PC-9 (cell line): ENCODE measurements at regions of chr6 and their contacts with region 1.

Region 1: DNA sequence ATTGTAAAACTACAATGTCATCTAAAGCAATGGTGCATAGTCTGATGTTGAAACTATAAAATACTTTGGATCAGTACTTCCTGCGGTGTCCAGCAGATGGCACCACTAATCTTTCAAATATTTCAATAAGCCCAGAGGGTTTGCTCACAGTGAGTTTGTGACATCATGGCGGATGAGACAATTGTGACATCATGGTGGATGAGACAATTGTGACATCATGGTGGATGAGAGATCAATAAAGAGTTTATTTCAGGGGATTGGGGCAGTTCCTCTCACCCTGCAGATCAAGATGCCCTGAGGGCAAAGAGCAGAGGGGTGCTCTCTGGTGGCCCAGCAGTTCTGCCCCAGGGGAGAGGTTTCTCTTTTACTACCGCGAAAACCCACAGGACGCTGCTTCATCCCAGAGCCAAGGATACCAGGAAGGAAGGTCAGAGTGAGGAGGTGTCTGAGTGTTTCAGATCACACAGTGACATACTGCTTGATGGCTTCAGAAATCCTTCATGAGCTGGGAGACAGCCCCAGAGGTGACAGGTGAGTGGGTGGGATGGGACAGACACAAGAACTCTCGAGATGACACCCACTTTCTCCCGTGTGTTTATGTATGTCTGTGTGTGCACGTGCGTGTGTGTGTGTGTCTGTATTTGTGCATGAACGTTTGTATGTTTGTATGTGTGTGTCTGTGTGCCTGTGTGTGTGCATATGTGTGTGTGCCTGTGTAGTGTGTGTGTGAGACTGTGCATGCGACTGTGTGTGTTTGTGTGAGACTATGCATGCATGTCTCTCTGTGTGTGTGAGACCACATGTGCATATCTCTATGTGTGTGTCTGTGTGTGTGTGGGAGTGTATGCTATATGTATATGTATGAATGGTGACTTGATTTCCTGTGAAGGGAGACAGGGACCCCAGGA is 7.3 kb upstream of the ULBP2 start:
- DNase-seq: peak; percentile 29 to 50
- H3K4me3 ChIP-seq: no peak overlapping the region
- H3K27ac ChIP-seq: no peak overlapping the region
- H3K4me1 ChIP-seq: peaks cover 24% of the 10 kb centered on the region
- H3K27me3 ChIP-seq: no peaks in the 10 kb centered on the region
- CTCF ChIP-seq: peak; percentile 92

Region 2: DNA sequence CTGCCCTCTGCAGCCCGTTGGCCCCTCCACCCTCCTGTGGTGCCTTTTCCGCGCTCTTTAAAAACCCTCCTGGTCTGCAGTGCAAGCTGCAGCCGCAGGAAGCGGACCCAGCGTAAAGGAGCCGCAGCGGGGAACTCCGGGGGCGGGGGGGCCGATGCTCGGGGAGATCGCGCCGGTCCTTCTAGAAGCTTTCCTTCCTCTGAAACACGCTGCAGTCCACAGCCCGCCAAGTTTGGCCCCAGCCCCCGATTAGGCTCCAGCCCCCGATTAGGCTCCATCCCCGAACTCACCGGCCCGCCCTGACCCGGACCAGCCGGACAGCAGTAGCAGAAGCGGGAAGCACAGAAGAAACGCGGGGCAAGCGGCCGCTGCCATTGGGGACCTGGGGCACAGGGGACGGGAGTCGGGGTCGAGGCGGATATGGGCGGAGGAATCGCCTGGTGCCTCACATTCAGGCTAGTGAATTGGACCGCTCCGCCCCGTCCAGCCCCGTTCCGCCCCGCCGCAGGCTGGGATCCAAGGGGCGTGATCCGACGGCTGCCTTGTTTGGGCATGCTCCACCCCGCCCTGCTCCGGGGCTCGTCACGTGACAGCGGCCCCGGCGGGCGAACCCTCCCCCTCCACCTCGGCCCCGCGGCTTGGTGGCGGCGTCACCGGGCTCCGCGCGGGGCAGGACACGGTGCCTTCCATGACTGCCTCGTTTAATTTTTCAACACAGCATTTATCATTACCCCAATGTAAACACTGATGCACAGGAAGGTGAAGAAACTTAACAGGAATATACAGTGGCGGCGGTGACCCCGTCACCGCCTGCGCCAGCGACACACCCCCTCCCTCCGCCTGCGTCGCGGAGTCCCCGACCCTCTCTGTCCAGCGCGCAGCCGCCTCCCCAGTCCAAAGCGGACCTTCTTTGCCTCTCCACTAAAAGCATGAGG is 70.5 kb after region 1 on chr6:
- CTCF ChIA-PET with region 1: no interaction called
- POLR2A ChIA-PET with region 1: no interaction called
- intact Hi-C with region 1: loop called (anchors 2 kb)
- DNase-seq: peak; percentile 78 to 92
- H3K4me3 ChIP-seq: peak overlapping the region; percentile 60
- H3K27ac ChIP-seq: no peak overlapping the region
- H3K4me1 ChIP-seq: peaks cover 16% of the 10 kb centered on the region
- H3K27me3 ChIP-seq: no peaks in the 10 kb centered on the region
- CTCF ChIP-seq: no peak; the same call in 1 of the 2 replicates

Region 3: DNA sequence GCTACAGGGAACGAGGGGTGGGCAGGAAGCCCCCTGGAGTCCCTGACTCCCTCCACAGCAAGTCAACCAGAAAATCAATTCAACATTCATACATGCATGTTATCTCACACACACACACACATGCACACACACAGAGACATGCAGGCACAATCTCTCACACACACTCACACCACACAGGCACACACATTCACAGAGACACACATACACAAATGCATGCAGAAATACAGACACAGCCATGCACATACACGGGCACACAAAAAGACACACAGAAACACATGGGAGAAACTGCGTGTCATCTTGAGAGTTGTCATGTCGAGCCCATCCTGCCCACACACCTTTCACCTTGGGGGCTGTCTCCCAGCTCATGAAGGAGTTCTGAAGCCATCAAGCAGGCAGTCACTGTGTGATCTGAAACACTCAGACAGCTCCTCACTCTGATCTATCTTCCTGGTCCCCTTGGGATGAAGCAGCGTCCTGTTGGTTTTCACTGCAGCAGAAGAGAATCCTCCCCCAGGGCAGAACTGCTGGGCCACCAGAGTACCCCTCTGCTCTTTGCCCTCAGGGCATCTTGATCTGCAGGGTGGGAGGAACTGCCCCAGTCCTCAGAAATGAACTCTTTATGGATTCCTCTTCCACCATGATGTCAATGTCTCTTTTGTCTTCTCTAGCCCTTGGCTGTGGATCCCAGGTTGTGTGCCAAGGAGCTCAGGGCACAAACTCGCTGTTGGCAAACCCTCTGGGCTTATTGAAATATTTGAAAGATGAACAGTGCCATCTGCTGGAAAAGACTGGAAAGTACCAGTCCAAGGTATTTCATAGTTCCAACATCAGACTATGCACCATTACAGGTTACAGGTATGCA is 82.1 kb after region 1 on chr6:
- CTCF ChIA-PET with region 1: no interaction called
- POLR2A ChIA-PET with region 1: no interaction called
- intact Hi-C with region 1: loop called (anchors 1 kb)
- DNase-seq: peak; percentile 42 to 60
- H3K4me3 ChIP-seq: no peak overlapping the region
- H3K27ac ChIP-seq: no peak overlapping the region
- H3K4me1 ChIP-seq: no peaks in the 10 kb centered on the region
- H3K27me3 ChIP-seq: no peaks in the 10 kb centered on the region
- CTCF ChIP-seq: peak; percentile 75

Region 4: DNA sequence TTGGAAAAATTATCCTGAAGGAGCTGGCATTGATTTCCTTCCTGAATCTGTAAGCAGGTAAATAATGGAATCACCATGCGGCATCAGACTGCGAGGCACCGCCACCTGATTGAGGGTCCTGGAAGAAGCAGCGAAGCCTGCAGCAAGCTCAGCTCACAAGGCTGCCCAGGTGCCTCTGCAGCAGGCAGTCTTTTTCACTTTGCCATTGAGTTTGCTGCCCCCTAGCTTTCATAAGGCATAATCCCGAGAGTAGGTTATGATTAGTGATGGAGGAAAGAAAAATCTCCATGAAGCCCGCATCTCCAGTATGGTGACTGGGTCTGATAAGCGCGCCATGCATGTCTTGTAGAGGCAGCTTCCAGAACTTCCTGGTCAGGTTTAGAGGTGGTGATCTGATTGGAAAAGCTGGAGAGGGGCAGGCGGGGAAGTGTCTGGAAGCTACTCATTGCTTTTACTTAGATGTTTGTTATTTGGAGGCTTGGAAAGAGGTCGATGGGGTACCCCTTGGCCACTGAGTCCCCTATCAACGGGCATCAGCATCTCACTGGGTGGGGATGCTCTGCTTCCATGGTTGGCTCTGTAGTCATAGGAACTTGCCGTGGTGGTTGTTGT is 461.0 kb after region 1 on chr6:
- CTCF ChIA-PET with region 1: no interaction called
- POLR2A ChIA-PET with region 1: no interaction called
- intact Hi-C with region 1: loop called (anchors 5 kb)
- DNase-seq: peak in 1 of 2 experiments; percentile 60
- H3K4me3 ChIP-seq: no peak overlapping the region
- H3K27ac ChIP-seq: no peak overlapping the region
- H3K4me1 ChIP-seq: peaks cover 12% of the 10 kb centered on the region
- H3K27me3 ChIP-seq: no peaks in the 10 kb centered on the region
- CTCF ChIP-seq: peak; percentile 82

Region 5: GRCh38 chr6:150652848-150653613 is 718.5 kb after region 1 on chr6:
- CTCF ChIA-PET with region 1: no interaction called
- POLR2A ChIA-PET with region 1: no interaction called
- intact Hi-C with region 1: no loop called
- DNase-seq: no peak
- H3K4me3 ChIP-seq: no peak overlapping the region
- H3K27ac ChIP-seq: no peak overlapping the region
- H3K4me1 ChIP-seq: no peaks in the 10 kb centered on the region
- H3K27me3 ChIP-seq: no peaks in the 10 kb centered on the region
- CTCF ChIP-seq: no peak

Region 6: GRCh38 chr6:151330134-151330696 is 1395.7 kb after region 1 on chr6:
- CTCF ChIA-PET with region 1: no interaction called
- POLR2A ChIA-PET with region 1: no interaction called
- intact Hi-C with region 1: loop called (anchors 10 kb)
- DNase-seq: no peak
- H3K4me3 ChIP-seq: no peak overlapping the region
- H3K27ac ChIP-seq: no peak overlapping the region
- H3K4me1 ChIP-seq: peaks cover 12% of the 10 kb centered on the region
- H3K27me3 ChIP-seq: no peaks in the 10 kb centered on the region
- CTCF ChIP-seq: no peak